Activated CD4-positive, alpha-beta memory T cell treated with anti-CD3 and anti-CD28 coated beads for 36 hours (primary cell): ENCODE measurements at regions of chr2 and their contacts with region 1.

Region 1: GRCh38 chr2:134198006-134198634 is 55.8 kb upstream of the MGAT5 start:
- DNase-seq: no peak
- H3K4me3 Mint-ChIP-seq: peak overlapping the region; percentile 36
- H3K27ac Mint-ChIP-seq: peak overlapping the region; percentile 79
- H3K4me1 Mint-ChIP-seq: peaks cover 84% of the 10 kb centered on the region
- H3K27me3 Mint-ChIP-seq: no peaks in the 10 kb centered on the region

Region 2: DNA sequence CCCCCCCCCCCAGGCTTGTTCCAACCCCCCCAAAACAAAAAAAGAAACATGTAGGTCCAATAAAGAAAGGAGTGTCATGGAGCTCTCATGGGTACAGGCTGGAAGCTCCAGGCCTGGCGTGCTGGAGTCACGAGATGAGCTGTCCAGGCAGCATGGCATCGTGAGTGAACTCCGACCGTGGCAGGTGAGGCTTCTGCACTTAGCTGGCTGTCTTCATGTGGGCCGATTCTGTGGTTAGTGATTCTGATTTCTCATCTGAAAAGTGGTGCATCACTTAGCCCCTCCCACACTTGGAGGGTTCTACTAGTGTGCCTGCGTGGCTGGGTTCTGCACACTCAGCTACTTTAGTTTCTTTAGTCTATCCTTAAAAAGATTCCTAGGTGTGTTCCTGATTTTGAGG is 70.6 kb before region 1 on chr2:
- CTCF ChIA-PET with region 1: interaction called, 5 read pairs
- POLR2A ChIA-PET with region 1: no interaction called
- intact Hi-C with region 1: loop called (anchors 2 kb)
- DNase-seq: peak; percentile 86
- H3K4me3 Mint-ChIP-seq: peak overlapping the region; percentile 25
- H3K27ac Mint-ChIP-seq: no peak overlapping the region
- H3K4me1 Mint-ChIP-seq: peaks cover 73% of the 10 kb centered on the region
- H3K27me3 Mint-ChIP-seq: no peaks in the 10 kb centered on the region

Region 3: DNA sequence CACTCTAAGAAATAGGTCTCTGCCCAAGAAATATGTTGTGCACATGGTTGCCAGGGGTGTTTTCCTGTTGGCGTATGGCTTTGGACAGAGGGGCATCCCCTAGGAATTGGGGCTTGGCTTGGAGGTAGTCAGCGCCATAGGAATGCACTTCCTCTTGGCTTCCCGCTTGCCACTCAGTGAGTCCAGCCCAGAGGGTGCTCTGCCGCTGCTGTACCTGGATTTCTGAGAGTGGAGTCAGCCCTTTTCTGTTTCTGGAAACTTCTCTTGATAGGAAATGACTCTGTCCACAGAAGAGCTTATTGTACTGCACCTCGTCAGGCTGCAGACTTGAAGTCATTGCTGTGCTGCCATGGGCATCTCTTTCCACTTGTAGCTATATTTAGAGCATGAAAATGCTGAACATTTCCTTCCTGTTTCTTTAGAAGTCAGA is 60.9 kb before region 1 on chr2:
- CTCF ChIA-PET with region 1: no interaction called
- POLR2A ChIA-PET with region 1: no interaction called
- intact Hi-C with region 1: loop called (anchors 2 kb)
- DNase-seq: peak; percentile 45
- H3K4me3 Mint-ChIP-seq: no peak overlapping the region
- H3K27ac Mint-ChIP-seq: peak overlapping the region; percentile 75
- H3K4me1 Mint-ChIP-seq: peaks cover 80% of the 10 kb centered on the region
- H3K27me3 Mint-ChIP-seq: no peaks in the 10 kb centered on the region

Region 4: GRCh38 chr2:134169788-134170187 is 28.3 kb before region 1 on chr2:
- CTCF ChIA-PET with region 1: no interaction called
- POLR2A ChIA-PET with region 1: interaction called, 6 read pairs
- intact Hi-C with region 1: loop called (anchors 1 kb)
- DNase-seq: peak; percentile 59
- H3K4me3 Mint-ChIP-seq: no peak overlapping the region
- H3K27ac Mint-ChIP-seq: peak overlapping the region; percentile 68
- H3K4me1 Mint-ChIP-seq: peaks cover 84% of the 10 kb centered on the region
- H3K27me3 Mint-ChIP-seq: no peaks in the 10 kb centered on the region

Region 5: DNA sequence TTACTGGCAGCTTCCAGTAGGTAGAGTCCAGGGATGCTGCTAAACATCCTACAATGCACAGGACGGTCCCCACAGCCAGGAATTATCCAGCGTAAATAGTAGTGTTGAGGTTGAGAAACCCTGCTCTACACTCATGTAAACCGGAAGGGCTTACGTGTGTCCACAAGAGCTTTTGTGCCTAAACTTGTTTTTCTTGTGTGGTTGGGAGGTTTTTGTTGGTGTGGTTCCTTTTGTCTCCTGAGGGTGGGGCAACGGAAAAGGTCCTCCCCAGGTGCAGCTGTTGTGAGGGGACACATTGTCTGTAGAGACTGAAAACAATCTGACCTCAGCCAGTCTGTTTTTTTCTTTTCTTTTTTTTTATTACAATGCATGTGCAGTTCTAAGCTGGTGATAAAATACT is 16.9 kb before region 1 on chr2:
- CTCF ChIA-PET with region 1: interaction called, 5 read pairs
- POLR2A ChIA-PET with region 1: no interaction called
- intact Hi-C with region 1: loop called (anchors 1 kb)
- DNase-seq: peak; percentile 51
- H3K4me3 Mint-ChIP-seq: no peak overlapping the region
- H3K27ac Mint-ChIP-seq: peak overlapping the region; percentile 47
- H3K4me1 Mint-ChIP-seq: peaks cover 87% of the 10 kb centered on the region
- H3K27me3 Mint-ChIP-seq: no peaks in the 10 kb centered on the region

Region 6: GRCh38 chr2:134218930-134219658 is 21.0 kb after region 1 on chr2:
- CTCF ChIA-PET with region 1: interaction called, 6 read pairs
- POLR2A ChIA-PET with region 1: interaction called, 5 read pairs
- intact Hi-C with region 1: loop called (anchors 1 kb)
- DNase-seq: peak; percentile 56
- H3K4me3 Mint-ChIP-seq: peak overlapping the region; percentile 49
- H3K27ac Mint-ChIP-seq: peak overlapping the region; percentile 74
- H3K4me1 Mint-ChIP-seq: peaks cover 67% of the 10 kb centered on the region
- H3K27me3 Mint-ChIP-seq: no peaks in the 10 kb centered on the region

Region 7: DNA sequence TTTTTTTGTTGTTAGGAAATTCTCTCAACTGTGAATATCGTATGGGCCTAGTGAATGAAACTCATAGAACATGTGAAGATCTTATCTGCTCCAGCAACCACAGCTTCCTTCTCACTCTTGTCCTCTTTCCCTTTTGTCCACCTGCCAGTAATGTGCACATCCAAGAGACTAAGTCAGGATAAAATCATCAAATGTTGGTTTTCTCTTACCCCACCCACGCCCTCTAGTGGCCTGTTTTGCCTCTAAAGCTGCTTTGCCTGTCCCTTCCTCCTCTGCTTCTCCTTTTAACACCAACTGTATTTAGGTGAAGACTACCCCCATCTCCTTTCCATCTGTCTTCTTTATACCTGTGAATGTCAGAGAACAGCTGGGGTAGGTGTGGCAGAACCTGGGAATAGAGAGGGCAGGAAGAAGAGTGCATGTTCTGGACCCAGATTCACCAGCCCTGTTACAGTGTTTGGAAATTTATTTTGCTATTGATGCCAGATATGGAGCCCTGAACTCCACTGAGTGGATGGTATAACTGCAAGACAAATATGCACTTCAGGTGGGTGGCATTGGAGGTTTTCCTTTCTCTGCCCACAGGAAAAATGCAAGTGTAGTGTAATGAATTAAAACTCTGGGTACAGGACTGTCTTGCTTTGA is 47.3 kb after region 1 on chr2:
- CTCF ChIA-PET with region 1: interaction called, 21 read pairs
- POLR2A ChIA-PET with region 1: no interaction called
- intact Hi-C with region 1: loop called (anchors 1 kb)
- DNase-seq: peak; percentile 82
- H3K4me3 Mint-ChIP-seq: no peak overlapping the region
- H3K27ac Mint-ChIP-seq: no peak overlapping the region
- H3K4me1 Mint-ChIP-seq: peaks cover 82% of the 10 kb centered on the region
- H3K27me3 Mint-ChIP-seq: peaks cover 2% of the 10 kb centered on the region